ENCODE measurements at regions of chr16 and their contacts with region 1.

Region 1: GRCh38 chr16:88811769-88812512 is at the start of gene APRT:
- DNase-seq: peak; percentile 61
- ATAC-seq: peak; percentile 70
- H3K4me3 ChIP-seq: peak within 1 kb of the TSS; percentile 64 to 78
- H3K27ac ChIP-seq: peak within 1 kb of the TSS; percentile 89
- H3K4me1 ChIP-seq: peaks cover 21% of the 10 kb centered on the region
- H3K27me3 ChIP-seq: no peaks in the 10 kb centered on the region
- CTCF ChIP-seq: no peak; the same call in 1 of the 2 replicates
- total RNA-seq, gene APRT: 231 TPM

Region 2: DNA sequence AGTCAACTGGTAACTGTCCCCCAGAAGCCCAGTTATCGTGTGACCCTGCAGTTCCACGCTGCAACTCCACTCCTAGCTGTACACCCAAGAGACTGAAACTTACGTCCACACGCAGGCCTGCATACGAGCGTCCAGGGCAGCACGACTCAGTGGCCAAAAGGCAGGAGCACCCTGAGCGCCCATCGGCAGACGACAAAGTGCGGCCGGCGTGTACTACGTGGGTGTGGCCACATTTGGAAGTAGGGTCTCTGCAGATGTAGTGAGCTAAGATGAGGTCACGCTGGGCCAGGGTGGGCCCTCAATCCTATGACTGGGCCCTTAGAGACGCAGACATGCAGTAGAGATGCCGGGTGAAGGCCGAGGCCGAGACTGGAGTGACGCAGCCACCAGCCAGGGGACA is 31.3 kb after region 1 on chr16:
- CTCF ChIA-PET with region 1: interaction called, 12 read pairs
- POLR2A ChIA-PET with region 1: no interaction called
- in situ Hi-C with region 1: no loop called
- intact Hi-C with region 1: no loop called
- DNase-seq: no peak
- ATAC-seq: no peak
- H3K4me3 ChIP-seq: no peak overlapping the region
- H3K27ac ChIP-seq: no peak overlapping the region
- H3K4me1 ChIP-seq: no peaks in the 10 kb centered on the region
- H3K27me3 ChIP-seq: no peaks in the 10 kb centered on the region
- CTCF ChIP-seq: no peak

Region 3: DNA sequence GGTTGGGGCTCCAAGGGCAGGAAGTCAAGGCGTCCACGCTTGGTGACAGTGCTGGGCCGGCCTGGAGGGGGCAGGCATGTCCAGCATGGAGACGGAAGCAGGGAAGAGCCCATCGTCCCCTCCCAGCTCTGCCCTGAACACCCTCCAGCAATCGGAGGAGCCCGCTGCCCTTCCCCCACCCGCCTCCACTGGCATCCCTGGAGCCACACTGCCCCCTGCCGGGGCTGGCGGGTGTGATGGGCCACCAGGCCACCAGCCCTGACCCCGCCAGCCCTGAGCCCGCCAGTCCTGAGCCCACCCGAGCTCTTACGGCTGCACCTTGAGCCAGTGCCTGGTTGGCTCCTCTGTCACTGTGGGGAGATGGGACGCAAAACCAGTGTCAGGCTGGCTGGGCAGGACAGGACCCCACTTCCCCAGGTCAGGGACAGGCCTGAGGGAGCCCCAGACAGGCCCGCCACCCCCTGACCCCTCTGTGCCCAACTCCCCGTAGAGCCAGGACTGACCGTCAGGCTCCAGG is 355.5 kb after region 1 on chr16:
- CTCF ChIA-PET with region 1: no interaction called
- POLR2A ChIA-PET with region 1: no interaction called
- in situ Hi-C with region 1: no loop called
- intact Hi-C with region 1: loop called (anchors 10 kb)
- DNase-seq: no peak
- ATAC-seq: peak; percentile 59
- H3K4me3 ChIP-seq: no peak overlapping the region
- H3K27ac ChIP-seq: no peak overlapping the region
- H3K4me1 ChIP-seq: peaks cover 6% of the 10 kb centered on the region; the same call in 1 of the 2 replicates
- H3K27me3 ChIP-seq: no peaks in the 10 kb centered on the region
- CTCF ChIP-seq: peak; percentile 81

Measured in Panc1 (cell line).